ENCODE measurements at regions of chr1 and their contacts with region 1.

Region 1: DNA sequence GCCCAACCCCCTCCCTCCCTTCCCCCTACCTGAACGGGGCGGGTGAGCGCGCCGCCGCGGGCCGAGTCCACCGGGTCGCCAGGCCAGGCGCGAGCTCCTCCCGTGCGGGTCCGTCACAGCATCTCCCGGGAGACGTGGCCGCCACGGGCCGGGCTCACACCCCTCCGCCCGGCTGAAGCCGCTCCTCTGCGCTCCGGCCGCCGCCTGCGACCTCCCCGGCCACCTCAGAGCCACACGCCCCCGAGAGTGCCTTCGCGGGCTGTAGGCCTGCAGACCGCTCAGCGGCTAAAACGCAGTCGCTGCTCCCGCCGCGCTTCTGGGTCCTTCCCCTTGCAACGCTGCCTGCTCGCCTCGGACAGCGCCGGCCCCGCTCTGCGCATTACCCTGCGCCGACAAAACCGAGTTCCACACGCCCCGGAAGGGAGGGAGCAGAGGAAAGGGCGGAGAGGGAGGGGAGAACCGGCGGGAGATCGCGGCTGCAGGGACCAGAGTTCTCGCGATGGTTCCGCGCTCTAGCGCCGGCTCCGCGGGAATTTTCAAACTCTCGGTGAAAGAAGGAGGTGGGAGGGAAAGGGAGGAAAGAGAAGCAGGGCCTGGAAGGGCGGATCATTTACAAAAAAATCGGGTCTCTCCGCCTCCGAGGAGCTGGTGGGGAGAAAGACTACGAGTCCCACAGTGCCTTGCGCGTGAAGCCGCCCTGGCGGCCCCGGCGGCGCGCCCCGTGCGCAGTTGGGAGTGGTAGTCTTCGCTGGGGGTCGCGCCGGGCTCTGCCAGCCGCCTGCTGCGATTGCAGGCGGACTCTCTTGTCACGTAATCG is at the start of gene AHCTF1:
- DNase-seq: peak; percentile 98
- H3K4me3 Mint-ChIP-seq: peak within 1 kb of the TSS; percentile 94
- H3K27ac Mint-ChIP-seq: peak within 1 kb of the TSS; percentile 96
- H3K4me1 Mint-ChIP-seq: peaks cover 22% of the 10 kb centered on the region
- H3K27me3 Mint-ChIP-seq: peaks cover 4% of the 10 kb centered on the region
- total RNA-seq, gene AHCTF1: 47.9 and 56.5 TPM in 2 replicates

Region 2: DNA sequence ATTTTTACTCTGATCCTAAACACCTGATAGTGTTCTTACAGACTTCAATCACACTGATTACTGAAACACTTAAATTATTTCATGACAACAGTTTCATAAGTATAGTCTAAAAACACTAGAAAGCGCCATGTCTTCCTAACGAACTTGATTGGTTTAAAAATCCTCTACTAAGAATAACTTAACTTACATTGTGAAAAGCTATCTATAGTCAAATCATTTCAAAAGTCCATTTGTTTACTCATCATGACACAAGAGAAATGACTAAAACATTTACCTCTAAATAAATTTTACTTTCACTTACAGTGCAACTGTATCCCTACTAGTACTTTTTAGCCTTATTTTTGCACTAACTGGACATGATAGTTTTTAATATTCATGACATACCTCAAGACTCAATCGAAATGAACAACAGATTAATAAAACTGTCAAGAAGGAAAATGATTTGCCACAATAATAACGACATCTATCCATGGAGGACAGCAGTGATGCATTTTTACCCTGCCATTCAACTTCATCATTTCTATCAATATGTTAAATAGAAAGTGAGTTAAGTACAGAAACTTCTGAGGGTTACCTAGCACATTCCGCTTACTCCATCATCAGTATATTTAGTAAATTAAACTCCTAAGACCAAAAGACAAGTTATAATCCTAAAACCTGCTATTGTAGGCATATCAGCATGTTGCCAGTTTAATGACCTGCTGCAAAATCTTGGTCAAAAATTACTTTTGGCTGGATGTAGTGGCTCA is 38.4 kb before region 1 on chr1:
- intact Hi-C with region 1: loop called (anchors 5 kb)
- DNase-seq: no peak
- H3K4me3 Mint-ChIP-seq: no peak overlapping the region
- H3K27ac Mint-ChIP-seq: peak overlapping the region; percentile 80
- H3K4me1 Mint-ChIP-seq: peaks cover 7% of the 10 kb centered on the region
- H3K27me3 Mint-ChIP-seq: no peaks in the 10 kb centered on the region

Region 3: GRCh38 chr1:247103859-247104591 is 172.3 kb after region 1 on chr1 and contains the start of gene ZNF669:
- intact Hi-C with region 1: loop called (anchors 1 kb)
- DNase-seq: peak; percentile 97
- H3K4me3 Mint-ChIP-seq: peak within 1 kb of the TSS; percentile 93
- H3K27ac Mint-ChIP-seq: peak within 1 kb of the TSS; percentile 89
- H3K4me1 Mint-ChIP-seq: peaks cover 8% of the 10 kb centered on the region
- H3K27me3 Mint-ChIP-seq: peaks cover 17% of the 10 kb centered on the region
- total RNA-seq, gene ZNF669: 6.2 and 6.7 TPM in 2 replicates

Region 4: GRCh38 chr1:247210376-247211117 is 278.8 kb after region 1 on chr1:
- intact Hi-C with region 1: loop called (anchors 2 kb)
- DNase-seq: peak; percentile 99
- H3K4me3 Mint-ChIP-seq: peak overlapping the region; percentile 95
- H3K27ac Mint-ChIP-seq: peak overlapping the region; percentile 94
- H3K4me1 Mint-ChIP-seq: peaks cover 33% of the 10 kb centered on the region
- H3K27me3 Mint-ChIP-seq: peaks cover 4% of the 10 kb centered on the region

Region 5: DNA sequence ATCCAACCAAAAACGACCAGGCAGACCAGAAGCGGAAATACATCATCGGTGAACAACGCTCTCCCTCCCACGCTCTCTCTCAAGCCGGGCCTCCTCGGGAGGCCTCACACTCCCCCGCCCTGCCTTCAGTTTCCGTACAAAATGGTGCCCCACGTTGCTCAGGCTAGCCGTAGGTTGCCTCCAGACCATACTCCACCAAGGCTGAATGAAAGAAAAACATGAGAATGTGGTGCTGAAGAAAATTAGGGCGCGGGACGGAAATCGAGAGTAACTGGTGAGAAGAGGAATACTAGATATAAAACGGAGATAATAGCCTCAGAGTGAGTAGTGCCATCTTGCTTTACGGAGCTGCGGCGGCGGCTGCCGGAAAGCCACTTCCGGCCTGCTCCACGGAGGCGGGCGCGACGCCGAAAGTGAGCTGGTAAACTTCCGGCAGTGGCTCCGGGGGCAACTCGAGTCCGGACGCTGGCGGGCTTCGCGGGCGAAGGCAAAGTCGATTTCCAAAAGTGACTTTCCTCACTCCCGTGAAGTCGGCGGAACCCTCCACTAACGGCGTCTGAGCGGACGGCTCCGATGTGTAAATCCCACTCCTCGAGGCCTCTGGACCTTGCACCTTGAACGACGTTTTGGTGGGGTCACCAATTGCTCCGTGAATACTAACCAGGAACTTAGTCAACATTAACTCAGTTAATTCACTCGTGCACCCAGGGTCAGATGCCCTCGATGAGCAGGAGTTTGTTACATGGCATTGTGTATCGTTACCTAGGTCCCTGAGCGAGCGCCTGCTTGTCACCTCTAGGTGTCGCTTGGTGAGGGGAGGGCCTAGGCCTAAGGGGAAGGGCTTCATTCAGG is 1894.4 kb after region 1 on chr1 and contains the start of gene SH3BP5L:
- intact Hi-C with region 1: loop called (anchors 5 kb)
- DNase-seq: peak; percentile 97
- H3K4me3 Mint-ChIP-seq: peak within 1 kb of the TSS; percentile 93
- H3K27ac Mint-ChIP-seq: peak within 1 kb of the TSS; percentile 100
- H3K4me1 Mint-ChIP-seq: peaks cover 45% of the 10 kb centered on the region
- H3K27me3 Mint-ChIP-seq: peaks cover 5% of the 10 kb centered on the region
- total RNA-seq, gene SH3BP5L: 27.5 and 28.2 TPM in 2 replicates

Measured in activated CD4-positive, alpha-beta T cell treated with anti-CD3 and anti-CD28 coated beads, Interleukin-2, amount 10 ng/mL, durations not matched to agents 24 days and 14 days (primary cell).